ENCODE measurements at regions of chr1 and their contacts with region 1.

Region 1: GRCh38 chr1:183471743-183472487 is 384 bp upstream of the SMG7 start:
- DNase-seq: peak; percentile 98
- H3K4me3 Mint-ChIP-seq: peak overlapping the region; percentile 86
- H3K27ac Mint-ChIP-seq: peak overlapping the region; percentile 98
- H3K4me1 Mint-ChIP-seq: peaks cover 21% of the 10 kb centered on the region
- H3K27me3 Mint-ChIP-seq: no peaks in the 10 kb centered on the region
- CTCF ChIP-seq: no peak

Region 2: GRCh38 chr1:183349201-183349711 is 122.7 kb before region 1 on chr1:
- CTCF ChIA-PET with region 1: no interaction called
- POLR2A ChIA-PET with region 1: no interaction called
- intact Hi-C with region 1: no loop called
- DNase-seq: no peak
- H3K4me3 Mint-ChIP-seq: no peak overlapping the region
- H3K27ac Mint-ChIP-seq: no peak overlapping the region
- H3K4me1 Mint-ChIP-seq: no peaks in the 10 kb centered on the region
- H3K27me3 Mint-ChIP-seq: peaks cover 19% of the 10 kb centered on the region
- CTCF ChIP-seq: no peak

Region 3: GRCh38 chr1:183461350-183461749 is 10.6 kb before region 1 on chr1:
- CTCF ChIA-PET with region 1: interaction called, 4 read pairs
- POLR2A ChIA-PET with region 1: interaction called, 12 read pairs
- intact Hi-C with region 1: no loop called
- DNase-seq: peak; percentile 76
- H3K4me3 Mint-ChIP-seq: no peak overlapping the region
- H3K27ac Mint-ChIP-seq: no peak overlapping the region
- H3K4me1 Mint-ChIP-seq: peaks cover 23% of the 10 kb centered on the region
- H3K27me3 Mint-ChIP-seq: no peaks in the 10 kb centered on the region
- CTCF ChIP-seq: no peak

Region 4: GRCh38 chr1:183484254-183484653 is 12.3 kb after region 1 on chr1:
- CTCF ChIA-PET with region 1: interaction called, 6 read pairs
- POLR2A ChIA-PET with region 1: interaction called, 11 read pairs
- intact Hi-C with region 1: no loop called
- DNase-seq: peak; percentile 33
- H3K4me3 Mint-ChIP-seq: no peak overlapping the region
- H3K27ac Mint-ChIP-seq: no peak overlapping the region
- H3K4me1 Mint-ChIP-seq: peaks cover 51% of the 10 kb centered on the region
- H3K27me3 Mint-ChIP-seq: no peaks in the 10 kb centered on the region
- CTCF ChIP-seq: peak; percentile 40

Region 5: DNA sequence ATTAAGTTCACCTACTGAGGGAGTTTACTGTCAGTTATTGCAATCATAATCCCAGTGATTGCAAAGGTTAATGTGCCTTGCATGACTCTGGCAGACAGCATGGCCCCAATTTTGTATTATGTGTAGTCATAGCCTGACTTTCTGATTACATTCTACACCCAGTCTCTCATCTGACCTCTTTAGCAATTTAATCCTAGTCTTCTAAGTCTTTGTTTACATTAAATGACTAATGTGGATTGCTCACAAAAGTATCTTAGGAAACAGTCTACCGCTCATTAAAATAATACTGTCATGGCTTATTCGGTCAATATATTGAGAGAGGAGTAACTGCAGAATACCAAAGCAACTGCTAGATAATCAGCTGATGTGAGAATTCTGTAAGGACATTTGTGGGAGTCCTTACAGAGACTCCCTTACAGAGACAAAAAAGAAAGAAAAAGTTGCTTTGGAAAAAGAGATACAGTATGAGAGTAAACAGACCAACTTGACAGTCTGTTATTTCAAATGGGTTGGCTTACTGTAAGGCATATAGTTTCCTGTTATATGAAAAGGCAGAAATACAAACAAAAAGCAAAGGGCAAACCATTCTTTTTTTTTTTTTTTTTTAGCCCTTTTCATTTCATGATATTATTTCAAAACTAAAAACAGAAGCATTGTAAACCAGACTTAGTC is 43.2 kb after region 1 on chr1:
- CTCF ChIA-PET with region 1: interaction called, 4 read pairs
- POLR2A ChIA-PET with region 1: interaction called, 59 read pairs
- intact Hi-C with region 1: loop called (anchors 1 kb)
- DNase-seq: peak; percentile 91
- H3K4me3 Mint-ChIP-seq: peak overlapping the region; percentile 7
- H3K27ac Mint-ChIP-seq: peak overlapping the region; percentile 69
- H3K4me1 Mint-ChIP-seq: peaks cover 49% of the 10 kb centered on the region
- H3K27me3 Mint-ChIP-seq: no peaks in the 10 kb centered on the region
- CTCF ChIP-seq: no peak

Region 6: GRCh38 chr1:183543619-183544204 is 71.8 kb after region 1 on chr1:
- CTCF ChIA-PET with region 1: interaction called, 9 read pairs
- POLR2A ChIA-PET with region 1: interaction called, 11 read pairs
- intact Hi-C with region 1: loop called (anchors 1 kb)
- DNase-seq: peak; percentile 77
- H3K4me3 Mint-ChIP-seq: no peak overlapping the region
- H3K27ac Mint-ChIP-seq: no peak overlapping the region
- H3K4me1 Mint-ChIP-seq: peaks cover 7% of the 10 kb centered on the region
- H3K27me3 Mint-ChIP-seq: no peaks in the 10 kb centered on the region
- CTCF ChIP-seq: peak; percentile 77

Region 7: DNA sequence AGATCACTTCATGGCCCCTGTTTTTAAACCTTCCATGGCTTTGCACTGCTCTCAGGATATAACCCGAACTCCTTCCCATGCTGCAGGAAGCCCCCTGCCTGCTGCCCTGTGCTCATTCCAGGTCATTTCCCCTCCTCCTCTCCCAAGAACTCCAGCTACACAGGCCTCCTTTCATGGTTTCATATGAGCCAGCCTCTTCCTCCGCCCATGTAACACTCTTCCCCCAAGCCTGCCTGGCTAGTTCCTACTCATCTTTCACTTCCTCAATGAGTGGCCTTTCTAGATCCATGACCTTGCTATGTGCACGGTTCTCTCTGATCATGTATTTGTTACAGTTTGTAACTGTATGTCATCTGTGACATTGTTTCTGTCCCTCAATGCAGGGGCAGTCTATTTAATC is 121.4 kb after region 1 on chr1:
- CTCF ChIA-PET with region 1: no interaction called
- POLR2A ChIA-PET with region 1: no interaction called
- intact Hi-C with region 1: no loop called
- DNase-seq: no peak
- H3K4me3 Mint-ChIP-seq: no peak overlapping the region
- H3K27ac Mint-ChIP-seq: no peak overlapping the region
- H3K4me1 Mint-ChIP-seq: peaks cover 20% of the 10 kb centered on the region
- H3K27me3 Mint-ChIP-seq: no peaks in the 10 kb centered on the region
- CTCF ChIP-seq: no peak

Region 8: DNA sequence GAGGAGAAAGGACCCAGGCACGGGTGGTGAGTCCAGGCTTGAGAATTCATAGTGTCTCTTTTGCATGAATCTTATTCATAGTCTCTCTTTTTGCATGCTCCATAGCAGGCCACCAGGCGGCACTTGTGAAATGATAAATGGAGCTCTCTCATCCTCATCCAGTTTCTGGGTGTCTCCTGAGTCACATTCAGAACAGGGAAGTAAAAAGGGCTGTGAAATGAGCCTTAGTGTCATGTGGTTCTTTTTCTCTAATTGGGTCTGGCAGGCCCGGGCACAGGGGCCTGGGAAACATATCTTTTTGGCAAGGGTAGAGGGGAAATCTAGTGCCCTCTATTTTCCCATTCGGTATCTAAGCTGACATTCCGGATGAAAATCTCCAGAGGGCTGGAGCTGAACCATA is 137.4 kb after region 1 on chr1:
- CTCF ChIA-PET with region 1: no interaction called
- POLR2A ChIA-PET with region 1: interaction called, 3 read pairs
- intact Hi-C with region 1: loop called (anchors 1 kb)
- DNase-seq: peak; percentile 87
- H3K4me3 Mint-ChIP-seq: peak overlapping the region; percentile 38
- H3K27ac Mint-ChIP-seq: peak overlapping the region; percentile 99
- H3K4me1 Mint-ChIP-seq: peaks cover 31% of the 10 kb centered on the region
- H3K27me3 Mint-ChIP-seq: no peaks in the 10 kb centered on the region
- CTCF ChIP-seq: peak; percentile 69

Region 9: DNA sequence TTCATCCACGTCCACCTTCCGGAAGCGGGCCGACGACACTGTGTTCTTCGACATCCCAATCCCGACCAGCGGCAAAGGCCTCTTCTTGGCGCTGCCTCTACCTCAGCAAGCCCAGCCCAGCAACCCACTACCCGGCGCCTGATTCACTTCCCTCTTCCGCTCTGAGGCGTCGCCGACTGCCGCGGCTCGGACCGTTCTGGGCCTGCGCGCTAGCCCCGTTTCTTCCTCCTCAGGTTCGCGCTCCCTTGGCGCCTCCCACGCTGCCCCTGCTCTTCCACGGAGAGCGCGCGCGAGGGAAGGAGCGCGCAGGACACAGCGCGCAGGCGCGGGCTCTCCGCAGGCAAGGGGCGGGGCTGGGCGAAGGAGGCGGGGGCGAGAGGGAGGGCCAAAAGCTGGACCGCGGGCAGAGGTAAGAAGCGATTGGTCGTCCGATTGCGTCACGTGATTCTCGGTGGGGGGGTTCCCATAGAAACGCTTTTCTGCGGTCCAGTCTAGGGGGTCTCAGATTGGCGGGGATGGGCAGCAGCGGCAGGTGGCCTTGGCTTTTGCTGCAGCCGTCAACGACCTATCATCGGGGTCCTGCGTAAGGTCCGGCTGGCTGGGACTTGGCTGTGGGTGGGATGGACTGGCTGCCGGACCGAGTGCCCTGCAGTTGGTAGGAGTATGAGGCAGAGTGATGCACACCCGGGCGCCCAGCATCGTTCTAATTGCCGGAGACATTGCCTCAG is 163.9 kb after region 1 on chr1 and contains the start of gene ARPC5:
- CTCF ChIA-PET with region 1: interaction called, 4 read pairs
- POLR2A ChIA-PET with region 1: interaction called, 64 read pairs
- intact Hi-C with region 1: loop called (anchors 1 kb)
- DNase-seq: peak; percentile 99
- H3K4me3 Mint-ChIP-seq: peak within 1 kb of the TSS; percentile 100
- H3K27ac Mint-ChIP-seq: peak within 1 kb of the TSS; percentile 97
- H3K4me1 Mint-ChIP-seq: peaks cover 15% of the 10 kb centered on the region
- H3K27me3 Mint-ChIP-seq: no peaks in the 10 kb centered on the region
- CTCF ChIP-seq: no peak
- total RNA-seq, gene ARPC5: 195 and 240 TPM in 2 replicates

Region 10: DNA sequence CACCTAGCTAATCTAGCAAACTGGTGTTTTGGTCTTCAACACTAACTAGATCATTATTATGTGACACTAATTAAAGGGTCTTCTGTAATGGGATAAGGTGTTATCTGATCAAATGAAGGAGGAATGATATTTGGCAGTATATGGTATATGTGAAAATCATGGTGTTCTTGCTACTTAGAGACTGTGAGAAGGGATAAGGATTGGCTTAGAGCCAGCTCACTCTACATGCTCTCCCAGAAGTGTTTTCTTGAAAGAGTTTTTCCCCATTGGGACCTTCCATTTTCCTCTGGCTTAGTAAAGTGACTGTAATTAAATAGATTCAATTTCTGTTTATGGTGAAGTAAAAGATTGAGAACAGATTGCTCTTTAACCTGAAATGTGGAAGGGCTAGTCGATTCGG is 261.8 kb after region 1 on chr1:
- CTCF ChIA-PET with region 1: no interaction called
- POLR2A ChIA-PET with region 1: no interaction called
- intact Hi-C with region 1: no loop called
- DNase-seq: no peak
- H3K4me3 Mint-ChIP-seq: no peak overlapping the region
- H3K27ac Mint-ChIP-seq: no peak overlapping the region
- H3K4me1 Mint-ChIP-seq: peaks cover 16% of the 10 kb centered on the region
- H3K27me3 Mint-ChIP-seq: no peaks in the 10 kb centered on the region
- CTCF ChIP-seq: no peak